ENCODE measurements at regions of chr6 and their contacts with region 1.

Region 1: GRCh38 chr6:6379573-6379972 is 59.1 kb upstream of the F13A1 start:
- DNase-seq: no peak
- ATAC-seq: peak; percentile 41
- H3K4me3 ChIP-seq: no peak overlapping the region
- H3K4me3 Mint-ChIP-seq: no peak overlapping the region
- H3K27ac ChIP-seq: no peak overlapping the region
- H3K27ac Mint-ChIP-seq: peak overlapping the region; percentile 29
- H3K4me1 ChIP-seq: no peaks in the 10 kb centered on the region
- H3K4me1 Mint-ChIP-seq: peaks cover 9% of the 10 kb centered on the region
- H3K27me3 ChIP-seq: no peaks in the 10 kb centered on the region
- H3K27me3 Mint-ChIP-seq: no peaks in the 10 kb centered on the region
- CTCF ChIP-seq: no peak

Region 2: DNA sequence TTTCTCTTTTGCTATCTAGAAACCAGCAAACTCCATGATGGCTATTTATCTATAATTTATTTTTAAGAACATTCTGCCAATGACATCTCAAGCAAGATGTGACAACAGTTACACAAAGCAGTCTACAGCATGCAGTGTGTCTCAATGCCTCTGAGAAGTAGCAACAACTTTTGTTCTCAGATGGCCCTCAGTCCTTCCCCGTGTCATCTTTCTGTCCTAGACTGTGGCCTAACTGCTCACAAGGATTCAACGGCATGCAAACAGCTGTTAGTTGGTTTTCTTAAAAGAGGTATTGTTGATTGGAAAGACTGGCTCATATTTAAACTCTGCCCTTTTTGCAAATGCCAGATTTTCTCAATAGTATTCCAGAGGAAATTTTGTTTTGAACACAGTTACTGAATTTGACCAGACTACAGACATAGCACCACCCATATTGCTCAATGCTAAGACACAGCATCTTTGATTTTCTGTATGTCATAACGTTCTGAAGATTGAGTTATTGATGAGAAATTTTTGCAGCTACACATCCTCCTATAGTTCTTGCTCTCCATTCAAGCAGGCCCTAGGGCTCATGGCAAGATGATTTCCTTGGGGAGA is 33.0 kb before region 1 on chr6:
- CTCF ChIA-PET with region 1: no interaction called
- POLR2A ChIA-PET with region 1: interaction called, 11 read pairs
- intact Hi-C with region 1: no loop called
- DNase-seq: no peak
- ATAC-seq: no peak
- H3K4me3 ChIP-seq: no peak overlapping the region
- H3K4me3 Mint-ChIP-seq: no peak overlapping the region
- H3K27ac ChIP-seq: no peak overlapping the region
- H3K27ac Mint-ChIP-seq: no peak overlapping the region
- H3K4me1 ChIP-seq: no peaks in the 10 kb centered on the region
- H3K4me1 Mint-ChIP-seq: no peaks in the 10 kb centered on the region
- H3K27me3 ChIP-seq: peaks cover 0 to 21% (median 13%) of the 10 kb centered on the region in 4 experiments
- H3K27me3 Mint-ChIP-seq: peaks cover 20% of the 10 kb centered on the region
- CTCF ChIP-seq: no peak

Region 3: GRCh38 chr6:6420107-6420506 is 40.5 kb after region 1 on chr6:
- CTCF ChIA-PET with region 1: no interaction called
- POLR2A ChIA-PET with region 1: interaction called, 10 read pairs
- intact Hi-C with region 1: no loop called
- DNase-seq: no peak
- ATAC-seq: no peak
- H3K4me3 ChIP-seq: no peak overlapping the region
- H3K4me3 Mint-ChIP-seq: no peak overlapping the region
- H3K27ac ChIP-seq: no peak overlapping the region
- H3K27ac Mint-ChIP-seq: no peak overlapping the region
- H3K4me1 ChIP-seq: no peaks in the 10 kb centered on the region
- H3K4me1 Mint-ChIP-seq: no peaks in the 10 kb centered on the region
- H3K27me3 ChIP-seq: peaks cover 0 to 5% (median 2%) of the 10 kb centered on the region in 4 experiments
- H3K27me3 Mint-ChIP-seq: peaks cover 20% of the 10 kb centered on the region
- CTCF ChIP-seq: no peak

Measured in B cell (primary cell).